ENCODE measurements at regions of chr12 and their contacts with region 1.

Region 1: DNA sequence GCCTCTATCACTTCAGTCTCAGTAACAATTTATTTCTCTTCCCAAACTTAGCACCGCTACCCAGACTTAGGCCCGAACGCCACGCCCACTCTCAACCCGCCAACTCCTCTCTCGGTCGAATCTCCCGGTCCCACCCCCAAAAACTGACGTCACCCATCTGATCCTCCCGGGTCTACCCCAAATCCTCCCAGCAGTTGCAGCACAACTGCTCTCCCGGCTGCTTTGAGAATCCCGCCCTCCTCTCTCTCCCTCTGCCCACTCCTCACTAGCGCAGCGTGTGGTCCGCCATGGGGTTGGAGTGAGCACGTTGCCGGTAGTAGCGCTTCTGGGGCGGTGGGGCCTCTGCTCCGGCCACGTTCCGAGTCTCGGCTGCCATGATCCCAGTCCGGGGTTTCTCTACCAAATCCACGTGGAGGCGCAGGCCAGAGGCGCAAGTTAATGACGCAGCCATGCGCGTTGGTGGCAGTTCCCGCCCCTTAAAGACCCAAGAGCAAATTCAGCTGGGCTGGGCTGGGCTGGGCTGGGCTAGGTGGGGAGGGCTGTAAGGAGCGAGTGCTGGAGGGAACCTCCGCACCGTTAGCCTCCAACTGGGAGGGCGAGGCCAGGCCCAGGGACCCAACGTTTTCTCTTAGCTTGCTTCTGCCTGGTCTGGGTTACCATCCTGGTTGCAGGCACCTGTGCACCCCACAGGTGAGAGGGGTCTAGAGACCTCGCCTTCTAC is at the start of gene METTL1:
- DNase-seq: peak; percentile 96
- total RNA-seq, gene METTL1: 13.3 TPM

Region 2: GRCh38 chr12:57637364-57637763 is 134.5 kb before region 1 on chr12:
- intact Hi-C with region 1: no loop called
- DNase-seq: peak; percentile 36

Region 3: GRCh38 chr12:57661376-57661775 is 110.5 kb before region 1 on chr12:
- intact Hi-C with region 1: no loop called
- DNase-seq: no peak

Region 4: DNA sequence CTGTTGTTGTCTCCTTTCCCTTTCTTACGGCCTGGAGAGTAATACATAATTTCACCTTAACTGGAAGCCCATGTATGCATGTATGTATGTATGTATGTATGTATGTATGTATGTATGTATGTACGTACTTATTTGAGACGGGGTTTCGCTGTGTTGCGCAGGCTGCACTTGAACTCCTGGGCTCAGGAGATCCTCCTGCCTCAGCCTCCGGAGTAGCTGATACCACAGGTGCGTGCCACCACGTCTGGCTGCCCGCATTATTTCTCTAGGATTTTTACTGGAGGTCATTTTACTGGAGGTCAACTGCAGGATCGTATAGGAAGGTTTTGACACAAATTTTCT is 78.6 kb before region 1 on chr12:
- intact Hi-C with region 1: no loop called
- DNase-seq: no peak

Region 5: GRCh38 chr12:57751788-57752667 is 19.8 kb before region 1 on chr12 and contains the start of gene CDK4:
- intact Hi-C with region 1: loop called (anchors 2 kb)
- DNase-seq: peak; percentile 99
- total RNA-seq, gene CDK4: 46.3 TPM

Region 6: GRCh38 chr12:57782608-57783465 is 11.0 kb after region 1 on chr12 and contains the start of gene TSFM:
- intact Hi-C with region 1: loop called (anchors 1 kb)
- DNase-seq: peak; percentile 97
- total RNA-seq, gene TSFM: 47.7 TPM

Region 7: GRCh38 chr12:58105225-58106119 is 333.6 kb after region 1 on chr12:
- intact Hi-C with region 1: no loop called
- DNase-seq: no peak

Measured in cardiac septum (tissue), 1 donor.